ENCODE measurements at regions of chr14 and their contacts with region 1.

Region 1: DNA sequence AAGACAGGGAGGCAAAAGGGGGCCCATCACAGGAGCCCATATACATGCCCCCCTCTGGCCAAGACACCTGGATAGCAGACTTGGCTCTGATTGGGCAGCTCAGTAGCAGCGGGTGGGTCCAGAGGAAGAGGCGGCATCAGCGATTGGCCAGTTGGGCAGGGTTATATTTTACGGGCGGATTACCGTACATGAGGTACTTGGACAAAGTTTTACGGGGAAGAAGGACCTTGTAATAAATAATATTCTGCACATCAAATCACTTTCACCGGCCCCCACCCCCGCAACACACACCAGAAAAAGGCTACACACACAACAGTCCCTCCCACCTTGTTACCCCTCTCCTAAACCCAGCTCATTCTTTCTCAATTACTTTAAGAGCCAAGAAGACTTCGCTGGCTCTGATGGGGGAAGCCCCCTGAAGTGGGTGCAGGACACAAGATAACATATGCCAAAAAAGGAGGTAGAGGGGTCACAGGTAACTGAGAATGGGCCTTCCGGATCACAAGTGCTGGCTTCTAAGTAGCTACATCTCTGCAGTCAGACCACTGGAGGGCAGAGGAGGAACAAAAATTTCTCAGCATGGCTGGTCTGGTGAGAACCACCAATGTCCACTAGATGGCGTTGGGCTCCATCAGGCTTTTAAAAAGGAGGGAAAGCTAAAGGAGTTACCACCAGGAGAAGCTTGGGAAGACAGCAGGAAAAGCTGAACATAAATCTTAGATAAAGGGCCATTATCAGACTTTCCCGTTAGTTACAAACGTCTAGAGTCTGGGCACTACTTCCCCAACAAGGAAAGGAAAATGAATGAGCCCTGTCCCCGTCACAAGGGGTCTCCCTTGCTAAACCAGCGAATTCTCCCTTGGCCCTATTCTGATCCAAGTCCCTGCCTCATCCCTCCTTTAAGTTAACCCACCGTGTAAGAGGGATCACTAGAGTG is 11.4 kb upstream of the CDH24 start:
- DNase-seq: peak; percentile 83

Region 2: DNA sequence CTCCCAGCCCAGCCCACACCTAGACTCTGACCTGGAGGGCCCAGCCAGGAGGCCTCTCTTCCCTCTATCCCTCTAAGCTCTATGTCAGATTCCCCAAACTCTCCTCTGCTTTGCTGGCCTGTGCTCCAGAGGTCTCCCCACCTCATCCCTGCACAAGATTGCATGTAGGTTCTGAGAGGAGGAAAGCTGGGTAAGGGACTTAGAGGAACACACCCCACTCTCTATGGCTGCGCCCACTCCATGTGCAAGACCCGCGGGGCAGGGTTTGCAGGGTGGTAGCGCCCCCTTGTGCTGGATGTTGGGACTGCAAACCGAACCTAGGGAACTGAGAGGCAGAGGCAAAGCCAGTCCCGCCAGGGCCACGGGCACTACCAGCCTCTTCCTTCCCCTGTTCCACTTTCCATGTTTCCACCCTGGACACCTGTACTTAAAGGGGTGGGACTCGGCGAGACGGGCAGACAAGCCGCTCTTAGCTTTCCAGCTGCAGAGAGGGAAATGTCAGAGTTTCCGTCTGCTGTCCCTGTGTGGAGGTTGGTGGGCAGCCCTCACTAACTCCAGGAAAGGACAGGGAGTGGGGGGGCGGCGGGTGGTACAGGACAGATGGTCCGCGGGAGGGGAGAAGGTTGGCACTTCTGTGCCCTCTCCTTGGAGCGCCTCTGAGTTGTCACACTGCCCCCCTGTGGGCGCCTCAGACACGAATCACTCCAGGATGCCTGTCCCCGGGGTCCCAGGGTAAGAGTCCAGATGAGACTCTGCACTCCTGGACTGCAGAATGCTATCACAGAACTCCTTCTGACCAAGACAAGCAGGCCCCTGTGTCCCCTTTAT is 215.6 kb before region 1 on chr14:
- CTCF ChIA-PET with region 1: no interaction called
- POLR2A ChIA-PET with region 1: no interaction called
- DNase-seq: peak; percentile 84

Region 3: DNA sequence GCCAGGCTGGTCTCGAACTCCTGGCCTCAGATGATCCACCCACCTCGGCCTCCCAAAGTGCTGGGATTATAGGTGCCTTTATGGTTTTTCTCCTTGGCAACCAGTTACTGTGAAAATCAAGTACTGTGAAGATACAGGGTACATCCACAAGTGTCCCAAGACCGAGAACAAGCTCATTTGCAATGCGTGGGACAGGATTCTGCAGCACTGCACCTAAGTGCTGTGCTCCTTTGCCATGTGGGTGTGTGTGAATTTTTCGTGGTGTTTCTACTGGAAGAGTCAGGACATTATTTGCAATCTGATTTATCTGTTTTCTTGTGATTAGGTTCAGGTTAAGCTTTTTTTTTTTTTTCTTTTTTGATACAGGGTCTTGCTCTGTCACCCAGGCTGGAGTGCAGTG is 51.7 kb before region 1 on chr14:
- CTCF ChIA-PET with region 1: interaction called, 10 read pairs
- POLR2A ChIA-PET with region 1: interaction called, 3 read pairs
- DNase-seq: no peak

Region 4: GRCh38 chr14:23045419-23046357 is 23.1 kb before region 1 on chr14:
- CTCF ChIA-PET with region 1: no interaction called
- POLR2A ChIA-PET with region 1: no interaction called
- DNase-seq: no peak

Region 5: GRCh38 chr14:23057757-23058653 is 10.7 kb before region 1 on chr14:
- CTCF ChIA-PET with region 1: interaction called, 35 read pairs
- POLR2A ChIA-PET with region 1: interaction called, 10 read pairs
- DNase-seq: peak; percentile 87

Region 6: DNA sequence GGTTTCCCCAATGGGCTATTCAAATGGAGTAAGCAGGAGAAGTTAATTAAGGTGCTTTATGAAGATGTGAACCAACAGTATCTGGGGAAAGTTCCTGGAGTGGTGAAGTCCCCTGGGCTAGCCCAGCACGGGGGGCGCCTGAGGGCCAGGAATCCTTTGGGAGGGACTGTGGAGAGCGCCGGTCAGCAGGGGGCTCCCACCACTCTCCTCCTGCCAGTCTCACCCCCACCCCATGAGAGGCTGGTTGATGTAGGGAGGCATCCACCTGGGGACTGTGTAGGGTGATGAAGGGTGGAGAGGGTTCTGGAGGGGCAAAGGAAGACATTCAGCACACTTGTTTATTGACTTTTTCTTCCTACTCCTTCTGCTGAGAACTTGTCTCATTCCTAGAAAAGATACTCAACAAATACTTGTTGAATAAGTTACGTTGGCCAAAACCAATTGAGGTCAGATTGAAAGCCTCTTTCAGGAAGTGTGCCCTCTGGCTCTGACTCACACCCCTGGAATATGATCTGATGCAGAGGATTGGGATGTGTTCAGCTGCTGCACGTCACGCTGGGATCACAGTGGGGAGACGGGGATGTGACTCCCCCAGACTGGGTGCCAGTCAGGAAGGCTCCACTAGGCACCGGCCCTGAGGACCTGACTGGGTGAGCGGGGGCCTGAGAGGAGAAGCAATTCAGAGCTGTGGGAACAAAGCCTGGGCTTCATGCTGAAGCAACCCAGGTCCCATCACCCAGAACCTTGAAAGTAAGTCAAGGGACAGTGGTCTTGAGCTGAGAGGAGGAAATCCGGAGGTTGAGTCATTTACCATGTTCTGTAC is 46.1 kb after region 1 on chr14:
- CTCF ChIA-PET with region 1: interaction called, 32 read pairs
- POLR2A ChIA-PET with region 1: interaction called, 8 read pairs
- DNase-seq: no peak

Measured in HEK293T (cell line).